Right ventricle myocardium superior (tissue), 1 donor: ENCODE measurements at regions of chr14 and their contacts with region 1.

Region 1: DNA sequence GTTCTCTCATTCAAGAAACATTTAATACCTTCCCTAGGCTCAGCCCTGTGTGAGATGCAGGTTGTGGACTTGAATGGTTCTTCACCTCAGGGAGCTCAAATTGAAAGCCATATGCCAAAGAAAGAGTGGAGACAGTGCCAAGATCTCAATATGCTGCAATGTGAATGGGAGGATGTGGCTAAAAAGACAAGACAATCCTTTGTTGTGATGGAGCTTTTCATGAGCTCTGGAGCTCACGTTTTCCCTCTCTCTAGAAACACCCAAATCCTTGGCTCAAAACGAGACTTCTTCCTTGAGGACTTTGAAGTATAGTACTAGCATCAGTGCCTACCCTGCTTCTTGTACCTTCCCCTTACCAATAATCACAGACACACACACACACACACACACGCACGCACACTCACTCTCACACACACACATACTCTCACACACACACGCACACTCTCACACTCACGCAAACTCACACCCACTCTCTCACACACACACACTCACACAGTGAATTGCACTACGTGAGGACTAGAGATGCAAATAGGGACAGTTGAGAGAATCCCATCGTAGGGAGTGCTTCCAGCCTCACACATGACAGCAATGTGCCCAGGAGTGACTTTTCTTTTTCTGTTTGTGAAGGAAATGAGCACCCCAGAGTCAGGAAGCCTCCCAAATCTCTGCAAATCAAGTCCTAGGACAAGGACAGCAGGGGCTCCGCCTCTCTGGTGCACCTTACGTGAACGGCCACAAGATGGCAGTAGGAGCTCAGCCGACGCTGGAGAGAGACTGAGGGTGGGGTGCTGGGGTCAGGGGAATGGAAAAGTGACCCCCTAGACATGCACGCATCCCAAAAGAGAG is 231.4 kb downstream of the PCNX1 start:
- DNase-seq: peak; percentile 61
- ATAC-seq: peak; percentile 86

Region 2: DNA sequence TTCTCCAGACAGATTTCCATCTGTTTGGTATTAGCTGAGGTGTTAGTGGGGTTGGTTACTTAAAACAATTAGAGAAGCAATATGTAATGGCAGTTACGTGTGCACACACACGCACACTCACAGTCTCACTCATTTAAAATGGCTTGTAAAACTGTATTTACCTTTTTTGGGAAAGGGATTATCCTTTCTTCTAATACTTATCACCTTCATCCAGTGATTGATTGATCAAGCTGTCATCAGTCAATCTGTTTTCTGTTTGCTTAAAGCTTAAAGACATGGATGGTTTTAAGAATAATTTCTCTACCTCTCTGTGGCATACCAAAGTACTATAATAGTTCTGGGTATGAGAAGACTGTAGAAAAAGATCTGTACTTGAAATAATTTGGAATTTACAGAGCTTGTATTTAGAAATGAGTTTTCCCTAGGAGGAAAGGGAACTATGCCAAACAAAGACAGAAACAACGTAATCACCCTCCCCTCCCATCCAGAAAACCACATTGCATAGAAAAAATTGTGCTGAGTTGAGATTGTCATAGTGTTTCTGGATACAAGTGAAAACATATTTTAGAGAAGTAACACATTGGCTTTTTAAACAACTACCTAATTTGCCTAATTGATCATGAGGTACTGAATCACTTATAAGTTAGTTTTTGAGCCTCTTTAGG is 224.4 kb after region 1 on chr14:
- intact Hi-C with region 1: no loop called
- DNase-seq: no peak
- ATAC-seq: peak; percentile 63

Region 3: DNA sequence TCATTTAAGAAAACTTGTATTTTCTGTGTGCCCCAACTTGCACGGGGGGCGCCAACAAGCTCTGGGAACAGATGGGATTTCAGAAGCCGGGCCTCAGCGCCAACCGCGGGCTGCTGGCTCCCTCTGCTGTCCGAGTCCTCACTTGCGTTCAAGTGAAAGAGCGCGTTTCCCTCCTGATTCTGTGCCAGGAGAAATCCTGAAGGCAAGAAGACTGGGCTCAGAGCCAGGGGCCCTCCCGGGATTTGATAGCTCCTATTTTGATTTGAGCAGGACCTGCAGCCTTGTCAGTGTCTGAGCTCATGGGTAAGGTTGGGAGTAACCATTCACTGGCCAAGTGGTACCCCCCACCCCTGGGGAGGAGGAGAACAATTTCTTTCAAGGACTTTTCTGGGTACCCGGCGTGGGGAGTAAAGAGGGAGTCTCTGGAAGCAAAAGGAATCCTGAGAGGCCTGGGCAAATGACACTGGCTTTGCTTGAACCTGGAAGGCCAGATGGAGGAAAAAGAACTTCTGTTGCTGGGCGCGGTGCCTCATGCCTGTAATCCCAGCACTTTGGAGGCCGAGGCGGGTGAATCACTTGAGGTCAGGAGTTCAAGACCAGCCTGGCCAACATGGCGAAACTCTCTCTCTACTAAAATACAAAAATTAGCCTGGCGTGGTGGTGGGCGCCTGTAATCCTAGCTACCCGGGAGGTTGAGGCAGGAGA is 614.6 kb after region 1 on chr14:
- intact Hi-C with region 1: loop called (anchors 2 kb)
- DNase-seq: peak; percentile 94
- ATAC-seq: peak; percentile 94

Region 4: GRCh38 chr14:71855399-71856036 is 716.8 kb after region 1 on chr14:
- intact Hi-C with region 1: loop called (anchors 10 kb)
- DNase-seq: peak; percentile 82
- ATAC-seq: no peak